ENCODE measurements at regions of chr1 and their contacts with region 1.

Region 1: DNA sequence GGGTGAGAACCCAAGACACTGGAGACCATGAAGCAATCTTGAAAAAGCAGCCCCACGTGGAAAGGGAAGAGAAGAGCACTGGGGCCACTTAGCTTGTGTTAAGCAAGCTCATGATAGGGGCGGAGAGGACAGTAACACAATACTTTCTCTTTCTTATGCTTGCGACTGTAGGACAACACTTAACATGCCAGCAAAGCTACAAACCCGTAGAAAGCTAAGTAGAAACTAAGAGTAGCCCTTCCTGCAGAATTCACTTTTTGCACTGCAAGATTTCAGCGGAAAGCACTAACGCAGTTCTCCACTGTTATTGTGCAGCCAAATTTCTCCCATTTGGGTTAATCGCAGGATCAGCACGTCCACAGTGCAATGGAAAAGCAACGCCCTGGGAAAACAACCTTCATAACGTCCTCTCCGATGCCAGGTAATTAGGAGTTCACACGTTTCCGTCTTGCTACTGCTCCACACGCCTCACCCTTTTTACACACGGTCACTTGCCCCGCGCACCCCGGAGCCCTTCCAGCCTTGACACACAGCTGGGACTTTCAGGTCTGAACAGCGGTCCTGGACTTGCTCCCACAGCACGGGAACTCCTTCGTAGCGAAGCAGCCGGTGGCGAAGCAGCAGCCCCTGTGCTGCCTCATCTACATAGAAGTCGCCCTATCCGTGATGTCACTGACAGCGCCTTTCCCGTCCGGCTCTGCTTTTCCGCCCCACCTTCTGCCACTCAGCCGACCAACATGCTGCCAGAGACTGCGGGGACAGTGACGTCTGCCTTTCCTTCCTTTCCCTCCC is 148.6 kb downstream of the PPIAL4G start:
- DNase-seq: peak; percentile 89
- ATAC-seq: peak; percentile 75
- H3K4me3 ChIP-seq: peak overlapping the region; percentile 63 to 98 (median 73)
- H3K4me3 Mint-ChIP-seq: peak overlapping the region; percentile 98
- H3K27ac ChIP-seq: peak overlapping the region; percentile 91 to 95
- H3K27ac Mint-ChIP-seq: peak overlapping the region; percentile 100
- H3K4me1 ChIP-seq: peaks cover 7 to 20% of the 10 kb centered on the region in 2 donors
- H3K4me1 Mint-ChIP-seq: peaks cover 33% of the 10 kb centered on the region
- H3K27me3 ChIP-seq: peaks cover 0 to 5% (median 1%) of the 10 kb centered on the region in 4 experiments
- H3K27me3 Mint-ChIP-seq: peaks cover 16% of the 10 kb centered on the region
- CTCF ChIP-seq: no peak

Region 2: DNA sequence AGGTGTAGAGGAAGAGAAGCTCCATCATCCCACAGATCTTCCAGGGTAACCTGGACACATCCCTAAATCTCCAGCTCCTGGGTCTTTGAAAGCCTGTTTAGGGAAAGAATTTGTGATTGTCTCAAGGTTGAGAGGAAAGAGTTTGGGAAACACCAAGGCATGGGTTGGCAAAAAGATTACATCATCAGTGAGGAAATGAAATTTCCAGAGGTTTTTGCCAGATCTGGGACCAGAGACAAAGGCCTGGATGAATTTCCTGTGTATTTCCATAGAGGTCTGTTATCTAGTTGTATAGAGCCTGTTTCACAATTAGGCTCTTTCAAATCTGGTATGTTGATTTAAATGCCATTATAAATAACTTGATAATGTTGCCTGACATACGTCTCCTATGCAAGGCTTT is 324.0 kb before region 1 on chr1:
- CTCF ChIA-PET with region 1: no interaction called
- POLR2A ChIA-PET with region 1: no interaction called
- intact Hi-C with region 1: no loop called
- DNase-seq: no peak
- ATAC-seq: no peak
- H3K4me3 ChIP-seq: no peak overlapping the region
- H3K4me3 Mint-ChIP-seq: no peak overlapping the region
- H3K27ac ChIP-seq: no peak overlapping the region
- H3K27ac Mint-ChIP-seq: no peak overlapping the region
- H3K4me1 ChIP-seq: peaks cover 3 to 5% of the 10 kb centered on the region in 2 donors
- H3K4me1 Mint-ChIP-seq: peaks cover 6% of the 10 kb centered on the region
- H3K27me3 ChIP-seq: peaks cover 0 to 16% (median 8%) of the 10 kb centered on the region in 4 experiments
- H3K27me3 Mint-ChIP-seq: peaks cover 16% of the 10 kb centered on the region
- CTCF ChIP-seq: no peak

Region 3: GRCh38 chr1:148263128-148263905 is 71.2 kb before region 1 on chr1:
- CTCF ChIA-PET with region 1: no interaction called
- POLR2A ChIA-PET with region 1: interaction called, 8 read pairs
- intact Hi-C with region 1: loop called (anchors 1 kb)
- DNase-seq: peak; percentile 86
- ATAC-seq: peak; percentile 84
- H3K4me3 ChIP-seq: peak overlapping the region; percentile 52 to 85 (median 62)
- H3K4me3 Mint-ChIP-seq: peak overlapping the region; percentile 99
- H3K27ac ChIP-seq: peak overlapping the region; percentile 75 to 86
- H3K27ac Mint-ChIP-seq: peak overlapping the region; percentile 99
- H3K4me1 ChIP-seq: peaks cover 4 to 7% of the 10 kb centered on the region in 2 donors
- H3K4me1 Mint-ChIP-seq: peaks cover 14% of the 10 kb centered on the region
- H3K27me3 ChIP-seq: peaks cover 0 to 2% (median 0%) of the 10 kb centered on the region in 4 experiments
- H3K27me3 Mint-ChIP-seq: no peaks in the 10 kb centered on the region
- CTCF ChIP-seq: no peak

Region 4: DNA sequence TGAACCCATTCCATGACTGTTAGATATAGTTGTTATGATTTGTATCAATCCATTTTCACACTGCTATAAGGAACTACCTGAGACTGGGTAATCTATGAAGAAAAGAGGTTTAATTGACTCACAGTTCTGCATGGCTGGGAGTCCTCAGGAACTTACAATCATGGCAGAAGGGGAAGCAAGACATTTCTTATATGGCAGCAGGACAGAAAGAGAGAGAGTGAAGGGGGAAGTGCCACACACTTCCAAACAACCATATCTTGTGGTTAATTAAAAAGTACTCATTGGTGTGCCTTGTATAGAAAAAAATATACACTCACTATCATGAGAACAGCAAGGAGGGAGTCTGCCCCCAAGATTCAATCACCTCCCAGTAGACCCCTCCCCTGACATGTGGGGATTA is 44.9 kb before region 1 on chr1:
- CTCF ChIA-PET with region 1: no interaction called
- POLR2A ChIA-PET with region 1: no interaction called
- intact Hi-C with region 1: loop called (anchors 5 kb)
- DNase-seq: no peak
- ATAC-seq: no peak
- H3K4me3 ChIP-seq: no peak overlapping the region
- H3K4me3 Mint-ChIP-seq: no peak overlapping the region
- H3K27ac ChIP-seq: no peak overlapping the region
- H3K27ac Mint-ChIP-seq: no peak overlapping the region
- H3K4me1 ChIP-seq: no peaks in the 10 kb centered on the region
- H3K4me1 Mint-ChIP-seq: no peaks in the 10 kb centered on the region
- H3K27me3 ChIP-seq: peaks cover 0 to 3% (median 0%) of the 10 kb centered on the region in 4 experiments
- H3K27me3 Mint-ChIP-seq: peaks cover 13% of the 10 kb centered on the region
- CTCF ChIP-seq: no peak

Region 5: DNA sequence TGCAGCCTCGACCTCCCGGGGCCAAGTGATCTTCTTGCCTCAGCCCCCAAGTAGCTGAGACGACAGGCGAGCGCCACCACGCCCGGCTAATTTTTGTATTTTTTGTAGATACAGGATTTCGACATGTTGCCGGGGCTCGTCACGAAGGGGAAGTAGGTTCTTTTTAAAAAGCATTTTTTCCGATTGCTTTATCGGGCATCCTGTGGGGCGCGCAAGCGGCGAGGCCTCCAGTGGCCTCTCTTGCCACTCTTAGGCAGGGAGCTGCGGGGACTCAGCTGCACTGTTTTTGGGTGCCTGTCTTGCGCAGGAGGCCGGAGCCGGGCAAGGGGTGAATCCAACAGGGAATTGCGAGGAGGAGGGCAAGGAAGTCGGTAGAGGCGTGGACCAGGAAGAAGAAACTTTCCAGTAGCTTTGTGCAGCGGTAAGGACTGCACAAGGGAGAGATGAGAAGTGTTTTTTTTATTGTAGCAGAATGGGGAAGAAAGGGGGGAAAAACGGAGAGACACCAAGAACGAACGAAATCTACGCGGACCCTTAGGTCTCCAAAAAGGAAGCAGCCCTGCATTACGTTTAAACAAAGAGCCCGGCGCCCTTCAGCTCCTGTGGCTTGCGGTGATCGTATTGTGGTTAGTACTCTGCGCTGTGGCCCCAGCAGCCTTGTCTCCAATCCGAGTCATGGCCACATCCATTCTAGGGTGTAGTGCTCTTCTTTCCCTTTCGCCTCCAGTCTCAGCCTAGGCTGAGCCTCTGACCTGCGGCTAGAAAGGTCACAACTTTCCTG is 16.2 kb before region 1 on chr1:
- CTCF ChIA-PET with region 1: interaction called, 3 read pairs
- POLR2A ChIA-PET with region 1: interaction called, 10 read pairs
- intact Hi-C with region 1: loop called (anchors 2 kb)
- DNase-seq: peak; percentile 78
- ATAC-seq: peak; percentile 79
- H3K4me3 ChIP-seq: peak overlapping the region; percentile 52 to 90 (median 64)
- H3K4me3 Mint-ChIP-seq: peak overlapping the region; percentile 91
- H3K27ac ChIP-seq: peak overlapping the region; percentile 33 to 68
- H3K27ac Mint-ChIP-seq: peak overlapping the region; percentile 90
- H3K4me1 ChIP-seq: peaks cover 16 to 30% of the 10 kb centered on the region in 2 donors
- H3K4me1 Mint-ChIP-seq: peaks cover 33% of the 10 kb centered on the region
- H3K27me3 ChIP-seq: no peaks in the 10 kb centered on the region
- H3K27me3 Mint-ChIP-seq: no peaks in the 10 kb centered on the region
- CTCF ChIP-seq: no peak

Region 6: GRCh38 chr1:148362626-148363438 is 28.3 kb after region 1 on chr1:
- CTCF ChIA-PET with region 1: no interaction called
- POLR2A ChIA-PET with region 1: no interaction called
- intact Hi-C with region 1: no loop called
- DNase-seq: peak; percentile 32
- ATAC-seq: no peak
- H3K4me3 ChIP-seq: no peak overlapping the region
- H3K4me3 Mint-ChIP-seq: peak overlapping the region; percentile 88
- H3K27ac ChIP-seq: no peak overlapping the region
- H3K27ac Mint-ChIP-seq: peak overlapping the region; percentile 4
- H3K4me1 ChIP-seq: peaks cover 11 to 15% of the 10 kb centered on the region in 2 donors
- H3K4me1 Mint-ChIP-seq: peaks cover 23% of the 10 kb centered on the region
- H3K27me3 ChIP-seq: peaks cover 0 to 35% (median 14%) of the 10 kb centered on the region in 4 experiments
- H3K27me3 Mint-ChIP-seq: peaks cover 39% of the 10 kb centered on the region
- CTCF ChIP-seq: no peak

Region 7: DNA sequence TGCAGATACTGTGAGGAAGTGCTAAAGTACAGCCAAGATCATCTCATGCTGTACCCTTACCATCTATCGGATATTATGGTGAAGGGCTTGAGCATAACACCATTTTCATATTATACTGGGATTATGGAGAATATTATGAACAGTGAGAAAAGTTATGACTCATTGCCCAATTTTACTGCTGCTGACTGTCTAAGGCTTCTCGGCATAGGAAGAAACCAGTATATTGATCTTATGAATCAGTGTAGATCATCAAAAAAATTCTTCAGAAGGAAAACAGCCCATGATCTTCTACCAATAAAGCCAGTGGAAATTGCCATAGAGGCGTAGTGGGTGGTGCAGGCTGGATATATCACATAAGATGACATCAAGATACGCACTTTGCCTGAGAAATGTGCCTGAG is 100.9 kb after region 1 on chr1:
- CTCF ChIA-PET with region 1: no interaction called
- POLR2A ChIA-PET with region 1: no interaction called
- intact Hi-C with region 1: no loop called
- DNase-seq: no peak
- ATAC-seq: no peak
- H3K4me3 ChIP-seq: no peak overlapping the region
- H3K4me3 Mint-ChIP-seq: no peak overlapping the region
- H3K27ac ChIP-seq: no peak overlapping the region
- H3K27ac Mint-ChIP-seq: no peak overlapping the region
- H3K4me1 ChIP-seq: no peaks in the 10 kb centered on the region
- H3K4me1 Mint-ChIP-seq: peaks cover 9% of the 10 kb centered on the region
- H3K27me3 ChIP-seq: no peaks in the 10 kb centered on the region
- H3K27me3 Mint-ChIP-seq: no peaks in the 10 kb centered on the region
- CTCF ChIP-seq: no peak